Left ventricle myocardium inferior (tissue), 1 donor: ENCODE measurements at regions of chr1 and their contacts with region 1.

Region 1: DNA sequence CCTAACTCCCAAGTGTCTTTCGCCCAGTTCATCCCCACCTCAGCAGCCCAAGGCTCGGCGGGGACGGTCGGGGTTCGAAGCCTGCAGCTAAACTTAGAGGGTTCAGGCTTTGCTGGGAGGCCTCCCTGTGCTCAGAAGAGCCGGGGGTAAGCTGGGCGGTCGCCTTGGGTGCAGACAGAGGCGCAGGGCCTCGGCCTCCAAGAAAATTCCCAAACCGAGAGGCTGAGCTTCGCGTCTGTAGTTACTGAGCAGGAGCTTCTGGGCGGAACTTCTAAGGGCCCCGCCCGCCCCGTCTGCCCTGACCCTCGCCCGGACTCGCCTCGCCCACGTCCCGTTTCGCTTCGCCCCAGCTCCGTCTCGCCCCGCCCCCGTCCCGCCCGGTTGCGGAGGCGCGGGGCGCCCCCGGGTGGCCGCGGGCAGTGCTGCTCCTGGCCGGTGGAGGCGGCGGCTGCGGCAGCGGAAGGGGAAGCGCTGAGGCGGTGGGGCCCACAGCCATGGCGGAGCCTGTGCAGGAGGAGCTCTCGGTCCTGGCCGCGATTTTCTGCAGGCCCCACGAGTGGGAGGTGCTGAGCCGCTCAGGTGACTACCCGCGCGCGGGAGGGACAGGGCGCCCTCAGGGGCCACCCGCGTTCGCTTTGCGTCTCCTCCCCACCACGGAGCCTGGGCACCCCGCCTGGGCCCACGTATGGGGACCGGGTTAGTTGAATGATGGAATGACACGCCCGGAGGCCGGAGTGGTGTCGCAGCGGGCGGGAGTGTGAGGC is at the start of gene RWDD3:
- DNase-seq: peak; percentile 97
- H3K4me3 ChIP-seq: peak within 1 kb of the TSS; percentile 76
- H3K27ac ChIP-seq: peak within 1 kb of the TSS; percentile 95
- H3K4me1 ChIP-seq: peaks cover 94% of the 10 kb centered on the region
- H3K27me3 ChIP-seq: no peaks in the 10 kb centered on the region
- CTCF ChIP-seq: peak; percentile 95
- total RNA-seq, gene RWDD3: 19.4 TPM

Region 2: GRCh38 chr1:95072532-95073419 is 161.1 kb before region 1 on chr1 and contains the start of gene ALG14:
- intact Hi-C with region 1: loop called (anchors 10 kb)
- DNase-seq: peak; percentile 94
- H3K4me3 ChIP-seq: peak within 1 kb of the TSS; percentile 75
- H3K27ac ChIP-seq: peak within 1 kb of the TSS; percentile 98
- H3K4me1 ChIP-seq: peaks cover 17% of the 10 kb centered on the region
- H3K27me3 ChIP-seq: peaks cover 3% of the 10 kb centered on the region
- CTCF ChIP-seq: no peak
- total RNA-seq, gene ALG14: 2.6 TPM

Region 3: GRCh38 chr1:95116580-95117206 is 117.2 kb before region 1 on chr1:
- intact Hi-C with region 1: loop called (anchors 10 kb)
- DNase-seq: peak; percentile 52
- H3K4me3 ChIP-seq: peak overlapping the region; percentile 83
- H3K27ac ChIP-seq: peak overlapping the region; percentile 92
- H3K4me1 ChIP-seq: peaks cover 44% of the 10 kb centered on the region
- H3K27me3 ChIP-seq: no peaks in the 10 kb centered on the region
- CTCF ChIP-seq: peak; percentile 69